ENCODE measurements at regions of chr10 and their contacts with region 1.

Region 1: GRCh38 chr10:43816351-43817321 is 168.0 kb upstream of the ZNF32 start:
- DNase-seq: peak in 8 of 9 donors; percentile 62 to 77 (median 71)
- ATAC-seq: peak; percentile 94
- H3K4me3 ChIP-seq: peak overlapping the region; percentile 4
- H3K4me3 Mint-ChIP-seq: peak overlapping the region; percentile 53 to 77 (median 72)
- H3K27ac ChIP-seq: peak overlapping the region; percentile 19
- H3K27ac Mint-ChIP-seq: peak overlapping the region; percentile 44 to 95 (median 86)
- H3K4me1 ChIP-seq: peaks cover 23 to 34% of the 10 kb centered on the region in 2 donors
- H3K4me1 Mint-ChIP-seq: peaks cover 33 to 51% (median 48%) of the 10 kb centered on the region in 7 donors
- H3K27me3 ChIP-seq: no peaks in the 10 kb centered on the region
- H3K27me3 Mint-ChIP-seq: peaks cover 0 to 24% (median 0%) of the 10 kb centered on the region in 5 donors

Region 2: GRCh38 chr10:43461950-43462349 is 354.7 kb before region 1 on chr10:
- CTCF ChIA-PET with region 1: no interaction called
- POLR2A ChIA-PET with region 1: no interaction called
- intact Hi-C with region 1: no loop called
- DNase-seq: peak in 7 of 9 donors; percentile 62 to 79 (median 70)
- ATAC-seq: peak; percentile 92
- H3K4me3 ChIP-seq: no peak overlapping the region
- H3K4me3 Mint-ChIP-seq: peak overlapping the region in 1 of 10 donors; percentile 20
- H3K27ac ChIP-seq: no peak overlapping the region
- H3K27ac Mint-ChIP-seq: peak overlapping the region in 6 of 9 donors; percentile 2 to 67 (median 40)
- H3K4me1 ChIP-seq: peaks cover 1 to 7% of the 10 kb centered on the region in 2 donors
- H3K4me1 Mint-ChIP-seq: peaks cover 4 to 22% (median 19%) of the 10 kb centered on the region in 7 donors
- H3K27me3 ChIP-seq: no peaks in the 10 kb centered on the region
- H3K27me3 Mint-ChIP-seq: no peaks in the 10 kb centered on the region

Region 3: GRCh38 chr10:43846187-43846680 is 29.6 kb after region 1 on chr10:
- CTCF ChIA-PET with region 1: interaction called, 3 read pairs
- POLR2A ChIA-PET with region 1: no interaction called
- intact Hi-C with region 1: loop called in 1 of 2 experiments (anchors 1 kb)
- DNase-seq: peak in 5 of 9 donors; percentile 10 to 31 (median 14)
- ATAC-seq: peak; percentile 54
- H3K4me3 ChIP-seq: peak overlapping the region; percentile 54
- H3K4me3 Mint-ChIP-seq: peak overlapping the region; percentile 61 to 88 (median 82)
- H3K27ac ChIP-seq: peak overlapping the region; percentile 36
- H3K27ac Mint-ChIP-seq: peak overlapping the region; percentile 14 to 93 (median 83)
- H3K4me1 ChIP-seq: peaks cover 9 to 12% of the 10 kb centered on the region in 2 donors
- H3K4me1 Mint-ChIP-seq: peaks cover 15 to 44% (median 34%) of the 10 kb centered on the region in 7 donors
- H3K27me3 ChIP-seq: no peaks in the 10 kb centered on the region
- H3K27me3 Mint-ChIP-seq: peaks cover 0 to 4% (median 0%) of the 10 kb centered on the region in 5 donors